ENCODE measurements at regions of chr15 and their contacts with region 1.

Region 1: GRCh38 chr15:89087830-89088604 is at the start of gene ABHD2:
- H3K4me3 ChIP-seq: peak within 1 kb of the TSS; percentile 90
- H3K27ac ChIP-seq: peak within 1 kb of the TSS; percentile 55; the same call in 1 of the 2 replicates
- H3K4me1 ChIP-seq: peaks cover 28% of the 10 kb centered on the region
- CTCF ChIP-seq: no peak

Region 2: GRCh38 chr15:88657326-88658069 is 430.5 kb before region 1 on chr15:
- CTCF ChIA-PET with region 1: no interaction called
- POLR2A ChIA-PET with region 1: no interaction called
- H3K4me3 ChIP-seq: no peak overlapping the region
- H3K27ac ChIP-seq: no peak overlapping the region
- H3K4me1 ChIP-seq: no peaks in the 10 kb centered on the region
- CTCF ChIP-seq: peak; percentile 82

Region 3: GRCh38 chr15:89075846-89076245 is 12.2 kb before region 1 on chr15:
- CTCF ChIA-PET with region 1: interaction called, 11 read pairs
- POLR2A ChIA-PET with region 1: interaction called, 8 read pairs
- H3K4me3 ChIP-seq: no peak overlapping the region
- H3K27ac ChIP-seq: no peak overlapping the region
- H3K4me1 ChIP-seq: no peaks in the 10 kb centered on the region
- CTCF ChIP-seq: no peak

Region 4: GRCh38 chr15:89101302-89102191 is 13.5 kb after region 1 on chr15:
- CTCF ChIA-PET with region 1: interaction called, 13 read pairs
- POLR2A ChIA-PET with region 1: interaction called, 17 read pairs
- H3K4me3 ChIP-seq: no peak overlapping the region
- H3K27ac ChIP-seq: no peak overlapping the region
- H3K4me1 ChIP-seq: peaks cover 22% of the 10 kb centered on the region
- CTCF ChIP-seq: no peak